Ascending aorta (tissue), 2 donors: ENCODE measurements at regions of chr6 and their contacts with region 1.

Region 1: GRCh38 chr6:158644231-158645063 is at the start of gene DYNLT1:
- DNase-seq: peak; percentile 76 to 97
- H3K4me3 ChIP-seq: peak within 1 kb of the TSS; percentile 86 to 90
- H3K27ac ChIP-seq: peak within 1 kb of the TSS; percentile 90 to 97
- H3K4me1 ChIP-seq: peaks cover 10 to 42% of the 10 kb centered on the region in 2 donors
- H3K27me3 ChIP-seq: no peaks in the 10 kb centered on the region
- CTCF ChIP-seq: no peak
- total RNA-seq, gene DYNLT1: 5.7 TPM

Region 2: GRCh38 chr6:157764178-157765033 is 880.0 kb before region 1 on chr6:
- intact Hi-C with region 1: loop called (anchors 10 kb)
- DNase-seq: peak; percentile 90 to 97
- H3K4me3 ChIP-seq: no peak overlapping the region
- H3K27ac ChIP-seq: peak overlapping the region; percentile 82 to 84
- H3K4me1 ChIP-seq: peaks cover 12 to 47% of the 10 kb centered on the region in 2 donors
- H3K27me3 ChIP-seq: no peaks in the 10 kb centered on the region
- CTCF ChIP-seq: no peak

Region 3: DNA sequence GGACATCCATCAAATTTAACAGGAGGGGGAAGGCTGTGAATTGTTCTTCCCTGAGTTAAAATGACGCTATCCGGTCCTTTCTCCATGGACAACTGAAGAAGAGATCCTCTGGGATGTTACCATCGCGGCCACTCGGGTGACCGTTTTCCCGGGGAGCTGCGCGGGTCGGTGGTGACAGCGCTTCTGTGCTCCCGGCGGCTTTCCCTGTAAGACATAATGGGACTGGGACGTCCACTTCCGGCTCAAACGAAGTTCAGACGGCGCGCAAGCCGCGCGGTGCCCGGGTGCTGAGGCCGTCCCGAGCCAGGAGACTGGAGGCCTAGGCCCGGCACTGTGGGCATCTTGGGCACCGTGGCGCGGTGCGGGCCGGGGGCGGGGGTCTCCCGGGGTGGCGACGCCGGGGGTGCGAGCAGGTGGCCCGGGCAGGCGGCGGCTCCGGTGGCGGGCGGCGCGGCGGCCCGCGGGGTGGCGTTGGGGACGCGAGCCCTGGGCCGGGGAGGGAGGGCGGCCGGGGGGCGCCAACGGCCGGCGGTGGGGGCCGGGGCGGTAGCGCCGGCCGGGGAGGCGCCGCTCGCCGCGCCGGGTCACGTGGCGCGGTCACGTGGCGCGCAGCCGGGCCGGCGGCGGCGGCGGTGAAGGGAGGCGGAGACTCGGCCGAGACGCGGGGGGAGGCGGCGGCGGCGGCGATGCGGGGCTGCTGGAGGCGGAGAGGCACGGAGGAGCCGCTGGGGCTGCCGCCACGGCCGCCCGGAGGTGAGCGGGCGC is 412.7 kb before region 1 on chr6:
- intact Hi-C with region 1: loop called (anchors 2 kb)
- DNase-seq: peak in 1 of 2 donors; percentile 85
- H3K4me3 ChIP-seq: peak overlapping the region; percentile 84 to 87
- H3K27ac ChIP-seq: peak overlapping the region; percentile 85 to 94
- H3K4me1 ChIP-seq: peaks cover 0 to 5% of the 10 kb centered on the region in 2 donors
- H3K27me3 ChIP-seq: no peaks in the 10 kb centered on the region
- CTCF ChIP-seq: no peak

Region 4: DNA sequence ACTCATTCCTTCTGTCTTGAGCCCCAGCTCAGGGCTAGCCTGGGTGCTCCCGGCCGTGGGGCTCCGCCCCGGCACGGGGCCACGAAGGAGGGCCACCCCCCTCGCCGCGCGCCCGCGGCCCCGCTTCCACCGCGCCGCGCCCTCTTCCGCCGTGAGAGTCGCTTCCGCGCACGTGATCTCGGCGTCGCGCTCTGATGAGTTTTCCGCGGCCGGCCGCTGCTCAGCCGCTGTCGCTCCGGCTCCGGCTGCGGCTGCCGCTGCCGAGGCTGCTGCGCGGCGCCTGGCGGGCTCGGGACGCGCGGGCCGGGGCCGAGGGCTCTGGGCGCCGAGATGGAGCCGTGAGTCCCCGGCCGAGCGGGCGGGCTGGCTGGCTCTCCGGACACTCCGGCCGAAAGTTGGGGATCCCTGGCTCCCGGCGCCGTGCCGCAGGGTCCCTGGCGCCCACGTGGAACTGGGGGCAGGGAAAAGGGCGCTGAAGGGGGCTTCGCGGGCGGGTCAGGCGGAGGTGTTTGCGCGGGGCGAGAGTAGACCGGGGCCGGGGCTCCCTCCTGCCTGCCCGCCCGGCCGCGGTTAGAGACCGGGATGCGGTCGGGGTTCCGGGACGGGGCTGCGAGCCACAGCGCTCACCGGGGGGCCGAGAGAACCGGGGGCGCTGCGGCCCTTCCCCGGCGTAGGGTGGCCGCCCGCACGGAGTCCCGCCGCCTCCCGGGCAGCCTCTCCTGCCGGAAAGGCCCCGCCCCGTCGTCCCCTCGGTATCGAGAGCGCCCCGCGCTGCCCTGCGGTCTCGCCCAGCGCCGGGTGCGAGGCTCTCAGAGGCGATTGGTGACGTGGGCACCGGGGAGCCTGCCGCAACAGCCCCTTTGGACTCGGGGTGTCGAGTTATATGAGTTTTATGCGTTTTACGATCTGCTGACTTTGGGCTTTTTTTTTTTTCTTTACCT is 84.3 kb before region 1 on chr6 and contains the start of gene TMEM181:
- intact Hi-C with region 1: loop called (anchors 2 kb)
- DNase-seq: peak in 1 of 2 donors; percentile 86
- H3K4me3 ChIP-seq: peak within 1 kb of the TSS; percentile 79 to 97
- H3K27ac ChIP-seq: peak within 1 kb of the TSS; percentile 91 to 93
- H3K4me1 ChIP-seq: peaks cover 7 to 10% of the 10 kb centered on the region in 2 donors
- H3K27me3 ChIP-seq: no peaks in the 10 kb centered on the region
- CTCF ChIP-seq: no peak
- total RNA-seq, gene TMEM181: 16.3 TPM

Region 5: GRCh38 chr6:158666628-158667359 is 22.3 kb after region 1 on chr6:
- intact Hi-C with region 1: no loop called
- DNase-seq: peak in 1 of 2 donors; percentile 62
- H3K4me3 ChIP-seq: no peak overlapping the region
- H3K27ac ChIP-seq: no peak overlapping the region
- H3K4me1 ChIP-seq: no peaks in the 10 kb centered on the region
- H3K27me3 ChIP-seq: no peaks in the 10 kb centered on the region
- CTCF ChIP-seq: no peak

Region 6: GRCh38 chr6:158694913-158695312 is 50.5 kb after region 1 on chr6:
- intact Hi-C with region 1: loop called (anchors 5 kb)
- DNase-seq: no peak
- H3K4me3 ChIP-seq: no peak overlapping the region
- H3K27ac ChIP-seq: no peak overlapping the region
- H3K4me1 ChIP-seq: no peaks in the 10 kb centered on the region
- H3K27me3 ChIP-seq: no peaks in the 10 kb centered on the region
- CTCF ChIP-seq: no peak

Region 7: DNA sequence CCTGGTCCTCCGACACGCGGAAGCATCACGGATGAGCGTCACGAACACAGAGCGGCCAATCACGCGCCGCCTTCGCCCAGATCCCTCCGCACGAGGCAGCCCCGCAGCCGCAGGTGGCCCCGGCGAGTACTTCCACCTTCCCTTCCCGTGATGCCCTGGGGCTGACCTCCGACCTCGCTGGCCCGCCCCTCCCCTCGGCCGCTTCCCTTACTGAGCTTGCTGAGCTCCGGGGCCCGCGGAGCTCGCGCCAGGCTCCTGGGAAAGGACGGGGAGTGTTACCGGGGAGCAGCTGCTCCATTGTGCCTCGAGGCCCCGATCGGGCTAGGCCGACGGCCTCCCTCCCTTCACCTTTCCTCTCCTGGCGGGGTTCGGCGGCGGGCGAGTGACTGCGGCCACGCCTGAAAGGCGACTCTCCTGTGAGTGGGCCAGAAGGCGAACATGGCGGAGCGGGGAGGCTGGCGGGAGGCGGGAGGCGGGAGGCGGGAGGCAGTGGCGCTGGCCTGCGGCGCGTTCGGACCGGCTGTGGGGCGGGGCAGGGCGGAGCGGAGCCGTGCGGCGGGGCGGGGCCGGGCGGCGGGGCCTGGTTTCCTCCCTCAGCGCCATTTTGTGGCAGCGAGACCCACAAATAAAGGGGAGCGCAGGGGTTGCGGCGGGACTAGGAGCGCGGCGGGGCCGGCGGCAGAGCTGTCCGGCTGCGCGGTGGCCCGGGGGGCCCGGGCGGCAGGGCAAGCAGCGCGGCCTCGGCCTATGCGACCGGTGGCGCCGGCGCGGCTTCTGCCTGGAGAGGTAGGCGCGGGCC is 1082.7 kb after region 1 on chr6 and contains the start of gene WTAP:
- intact Hi-C with region 1: loop called (anchors 10 kb)
- DNase-seq: peak; percentile 87 to 97
- H3K4me3 ChIP-seq: peak within 1 kb of the TSS; percentile 95 to 100
- H3K27ac ChIP-seq: peak within 1 kb of the TSS; percentile 98 to 100
- H3K4me1 ChIP-seq: peaks cover 6 to 25% of the 10 kb centered on the region in 2 donors
- H3K27me3 ChIP-seq: no peaks in the 10 kb centered on the region
- CTCF ChIP-seq: no peak
- total RNA-seq, gene WTAP: 44.6 TPM